ENCODE measurements at regions of chr19 and their contacts with region 1.

Region 1: GRCh38 chr19:49676690-49677231 is 310 bp upstream of the PRMT1 start:
- DNase-seq: peak; percentile 95 to 100 (median 98)
- ATAC-seq: peak; percentile 72
- H3K4me3 ChIP-seq: peak overlapping the region; percentile 99
- H3K4me3 Mint-ChIP-seq: peak overlapping the region; percentile 97
- H3K27ac ChIP-seq: peak overlapping the region; percentile 98
- H3K27ac Mint-ChIP-seq: peak overlapping the region; percentile 97
- H3K4me1 ChIP-seq: peaks cover 56% of the 10 kb centered on the region
- H3K4me1 Mint-ChIP-seq: peaks cover 46% of the 10 kb centered on the region
- H3K27me3 ChIP-seq: no peaks in the 10 kb centered on the region
- H3K27me3 Mint-ChIP-seq: no peaks in the 10 kb centered on the region
- CTCF ChIP-seq: no peak

Region 2: DNA sequence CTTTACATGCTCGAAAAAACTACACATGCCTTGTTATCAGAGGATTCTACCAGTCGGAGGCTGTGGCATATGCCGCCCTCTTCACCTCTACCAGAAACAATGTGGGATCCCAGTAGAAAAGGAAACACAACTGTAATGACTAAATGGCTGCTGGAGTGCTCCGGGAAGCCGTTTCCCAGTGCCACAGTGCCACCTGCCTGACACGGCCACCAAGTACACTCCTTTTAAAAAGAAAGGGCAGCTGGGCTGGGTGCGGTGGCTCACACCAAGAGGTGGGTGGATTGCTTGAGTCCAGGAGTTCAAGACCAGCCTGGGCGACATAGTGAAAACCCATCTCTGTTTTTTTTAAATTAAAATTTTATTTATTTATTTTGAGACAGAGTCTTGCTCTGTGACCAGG is 451.9 kb before region 1 on chr19:
- CTCF ChIA-PET with region 1: no interaction called
- POLR2A ChIA-PET with region 1: no interaction called
- intact Hi-C with region 1: loop called (anchors 1 to 2 kb)
- DNase-seq: peak in 5 of 14 experiments; percentile 11 to 56 (median 27)
- ATAC-seq: peak; percentile 43
- H3K4me3 ChIP-seq: no peak overlapping the region
- H3K4me3 Mint-ChIP-seq: no peak overlapping the region
- H3K27ac ChIP-seq: no peak overlapping the region
- H3K27ac Mint-ChIP-seq: no peak overlapping the region
- H3K4me1 ChIP-seq: peaks cover 8% of the 10 kb centered on the region
- H3K4me1 Mint-ChIP-seq: peaks cover 7% of the 10 kb centered on the region
- H3K27me3 ChIP-seq: peaks cover 0 to 4% of the 10 kb centered on the region in 2 experiments
- H3K27me3 Mint-ChIP-seq: peaks cover 13% of the 10 kb centered on the region
- CTCF ChIP-seq: no peak

Region 3: DNA sequence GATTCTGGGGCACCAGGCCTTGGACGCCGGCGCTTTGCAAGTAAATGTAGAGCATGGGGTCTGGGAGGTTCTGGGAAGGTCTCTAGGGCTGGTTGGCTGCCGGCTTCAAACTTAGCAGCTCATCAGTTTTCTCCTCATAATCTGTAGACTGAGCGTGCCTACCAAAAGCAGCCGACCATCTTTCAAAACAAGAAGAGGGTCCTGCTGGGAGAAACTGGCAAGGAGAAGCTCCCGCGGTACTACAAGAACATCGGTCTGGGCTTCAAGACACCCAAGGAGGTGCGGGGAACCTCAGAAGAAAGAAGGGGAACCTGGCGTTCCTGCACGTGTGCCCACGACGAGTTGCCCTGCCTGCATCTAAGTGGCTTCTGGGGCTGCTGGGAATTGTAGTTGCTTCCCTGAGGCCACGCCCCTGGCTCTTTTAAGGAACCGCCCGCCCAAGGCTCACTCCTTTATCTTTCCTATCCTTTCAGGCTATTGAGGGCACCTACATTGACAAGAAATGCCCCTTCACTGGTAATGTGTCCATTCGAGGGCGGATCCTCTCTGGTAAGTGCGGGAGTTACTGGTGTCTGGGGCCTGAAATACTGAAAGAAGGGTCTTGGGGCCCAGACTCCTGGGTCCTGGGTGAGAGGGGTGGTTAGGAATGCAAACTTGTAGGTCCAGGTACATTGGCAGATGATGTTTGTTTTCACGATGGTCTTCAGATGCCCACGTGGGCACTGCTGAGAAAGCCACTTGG is 179.5 kb before region 1 on chr19:
- CTCF ChIA-PET with region 1: no interaction called
- POLR2A ChIA-PET with region 1: interaction called, 11 read pairs
- intact Hi-C with region 1: loop called (anchors 2 kb)
- DNase-seq: peak; percentile 52 to 93 (median 73)
- ATAC-seq: peak; percentile 19
- H3K4me3 ChIP-seq: peak overlapping the region; percentile 99
- H3K4me3 Mint-ChIP-seq: peak overlapping the region; percentile 99
- H3K27ac ChIP-seq: peak overlapping the region; percentile 94 to 96
- H3K27ac Mint-ChIP-seq: peak overlapping the region; percentile 98
- H3K4me1 ChIP-seq: peaks cover 72% of the 10 kb centered on the region
- H3K4me1 Mint-ChIP-seq: peaks cover 70% of the 10 kb centered on the region
- H3K27me3 ChIP-seq: no peaks in the 10 kb centered on the region
- H3K27me3 Mint-ChIP-seq: no peaks in the 10 kb centered on the region
- CTCF ChIP-seq: no peak

Region 4: GRCh38 chr19:49580264-49581006 is 96.3 kb before region 1 on chr19 and contains the start of gene NOSIP:
- CTCF ChIA-PET with region 1: interaction called, 8 read pairs
- POLR2A ChIA-PET with region 1: interaction called, 17 read pairs
- intact Hi-C with region 1: no loop called
- DNase-seq: peak; percentile 93 to 98 (median 96)
- ATAC-seq: peak; percentile 98
- H3K4me3 ChIP-seq: peak within 1 kb of the TSS; percentile 75
- H3K4me3 Mint-ChIP-seq: peak within 1 kb of the TSS; percentile 90
- H3K27ac ChIP-seq: peak within 1 kb of the TSS in 1 of 2 donors; percentile 8
- H3K27ac Mint-ChIP-seq: peak within 1 kb of the TSS; percentile 67
- H3K4me1 ChIP-seq: peaks cover 18% of the 10 kb centered on the region
- H3K4me1 Mint-ChIP-seq: peaks cover 33% of the 10 kb centered on the region
- H3K27me3 ChIP-seq: no peaks in the 10 kb centered on the region
- H3K27me3 Mint-ChIP-seq: no peaks in the 10 kb centered on the region
- CTCF ChIP-seq: no peak
- total RNA-seq, gene NOSIP: 202 to 203 TPM

Region 5: GRCh38 chr19:49640113-49640898 is 36.5 kb before region 1 on chr19 and contains the start of gene RRAS:
- CTCF ChIA-PET with region 1: interaction called, 6 read pairs
- POLR2A ChIA-PET with region 1: interaction called, 70 read pairs
- intact Hi-C with region 1: loop called (anchors 1 to 2 kb)
- DNase-seq: peak; percentile 97 to 100 (median 99)
- ATAC-seq: peak; percentile 66
- H3K4me3 ChIP-seq: peak within 1 kb of the TSS; percentile 78
- H3K4me3 Mint-ChIP-seq: peak within 1 kb of the TSS; percentile 95
- H3K27ac ChIP-seq: peak within 1 kb of the TSS; percentile 91 to 96
- H3K27ac Mint-ChIP-seq: peak within 1 kb of the TSS; percentile 97
- H3K4me1 ChIP-seq: peaks cover 64% of the 10 kb centered on the region
- H3K4me1 Mint-ChIP-seq: peaks cover 65% of the 10 kb centered on the region
- H3K27me3 ChIP-seq: no peaks in the 10 kb centered on the region
- H3K27me3 Mint-ChIP-seq: no peaks in the 10 kb centered on the region
- CTCF ChIP-seq: no peak
- total RNA-seq, gene RRAS: 4.2 to 4.7 TPM

Region 6: DNA sequence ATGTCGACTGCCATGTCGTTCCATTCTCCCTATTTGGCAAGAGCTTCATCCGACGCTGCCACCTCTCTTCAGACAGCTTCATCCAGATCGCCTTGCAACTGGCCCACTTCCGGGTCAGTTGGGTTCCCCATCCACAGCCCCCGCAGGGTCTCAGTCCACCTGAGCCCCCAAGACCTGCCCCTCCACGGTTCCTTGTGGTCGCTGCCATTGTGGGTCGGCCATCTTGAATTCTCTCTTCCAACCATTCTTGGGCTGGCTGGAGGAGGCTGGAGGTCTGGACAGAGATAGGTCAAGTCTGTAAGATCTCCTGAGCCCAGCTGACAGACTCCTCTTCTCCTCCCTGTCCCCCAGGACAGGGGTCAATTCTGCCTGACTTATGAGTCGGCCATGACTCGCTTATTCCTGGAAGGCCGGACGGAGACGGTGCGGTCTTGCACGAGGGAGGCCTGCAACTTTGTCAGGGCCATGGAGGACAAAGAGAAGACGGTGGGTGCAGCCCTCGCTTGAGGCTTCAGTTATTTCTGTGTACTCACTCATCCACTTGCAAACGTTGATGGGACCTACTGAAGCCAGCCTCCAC is 33.7 kb after region 1 on chr19:
- CTCF ChIA-PET with region 1: no interaction called
- POLR2A ChIA-PET with region 1: no interaction called
- intact Hi-C with region 1: no loop called
- DNase-seq: no peak
- ATAC-seq: no peak
- H3K4me3 ChIP-seq: no peak overlapping the region
- H3K4me3 Mint-ChIP-seq: no peak overlapping the region
- H3K27ac ChIP-seq: no peak overlapping the region
- H3K27ac Mint-ChIP-seq: no peak overlapping the region
- H3K4me1 ChIP-seq: no peaks in the 10 kb centered on the region
- H3K4me1 Mint-ChIP-seq: no peaks in the 10 kb centered on the region
- H3K27me3 ChIP-seq: no peaks in the 10 kb centered on the region
- H3K27me3 Mint-ChIP-seq: no peaks in the 10 kb centered on the region
- CTCF ChIP-seq: no peak

Region 7: DNA sequence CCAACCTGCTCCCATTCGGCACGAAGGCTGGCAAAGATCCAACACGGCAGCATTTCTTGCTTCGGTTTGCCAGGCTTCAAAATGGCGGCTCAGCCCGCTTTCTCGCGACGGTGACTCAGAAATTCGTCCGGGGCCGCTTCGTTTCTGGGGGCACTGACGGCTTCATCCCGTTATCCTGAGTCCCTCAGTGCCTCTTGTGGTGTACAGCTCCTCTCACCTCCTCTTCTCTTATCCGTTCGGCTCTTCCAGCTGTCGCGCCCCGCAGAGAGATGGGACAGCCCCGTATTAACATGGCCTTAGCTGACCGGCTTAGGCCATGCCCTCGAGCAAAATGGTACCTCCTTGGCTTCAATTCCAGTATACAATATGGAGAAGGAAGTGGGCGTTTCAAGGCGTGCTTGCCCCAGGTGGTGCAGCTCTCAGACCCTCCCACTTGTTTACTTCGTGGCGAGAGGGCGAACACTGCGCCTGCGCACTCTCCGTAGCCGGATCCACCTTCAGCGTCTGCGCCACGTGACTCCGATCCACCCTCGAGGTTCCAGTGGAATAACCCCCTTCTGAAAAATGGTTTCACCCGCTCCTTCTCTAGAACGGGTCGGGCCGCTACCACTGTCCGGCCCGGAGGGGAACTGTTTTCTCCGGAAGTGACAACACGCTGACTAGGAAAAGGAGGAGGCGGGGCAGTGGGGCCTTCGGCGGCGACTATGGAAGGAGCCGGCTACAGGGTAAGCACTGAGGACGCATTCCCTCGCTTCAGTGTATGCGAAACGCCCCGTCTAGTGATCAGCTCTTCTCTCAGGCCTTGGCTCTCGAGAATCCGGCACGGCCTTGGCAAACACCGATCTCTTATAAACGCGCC is 200.5 kb after region 1 on chr19 and contains the starts of genes AKT1S1 and TBC1D17:
- CTCF ChIA-PET with region 1: no interaction called
- POLR2A ChIA-PET with region 1: interaction called, 10 read pairs
- intact Hi-C with region 1: no loop called
- DNase-seq: peak; percentile 95 to 100 (median 98)
- ATAC-seq: peak; percentile 60
- H3K4me3 ChIP-seq: peak within 1 kb of the TSS; percentile 88
- H3K4me3 Mint-ChIP-seq: no peak within 1 kb of the TSS
- H3K27ac ChIP-seq: peak within 1 kb of the TSS; percentile 98 to 100
- H3K27ac Mint-ChIP-seq: no peak within 1 kb of the TSS
- H3K4me1 ChIP-seq: peaks cover 35% of the 10 kb centered on the region
- H3K4me1 Mint-ChIP-seq: peaks cover 18% of the 10 kb centered on the region
- H3K27me3 ChIP-seq: no peaks in the 10 kb centered on the region
- H3K27me3 Mint-ChIP-seq: no peaks in the 10 kb centered on the region
- CTCF ChIP-seq: no peak
- total RNA-seq, gene AKT1S1: 15.1 to 15.8 TPM
- total RNA-seq, gene TBC1D17: 35.5 to 35.8 TPM

Region 8: DNA sequence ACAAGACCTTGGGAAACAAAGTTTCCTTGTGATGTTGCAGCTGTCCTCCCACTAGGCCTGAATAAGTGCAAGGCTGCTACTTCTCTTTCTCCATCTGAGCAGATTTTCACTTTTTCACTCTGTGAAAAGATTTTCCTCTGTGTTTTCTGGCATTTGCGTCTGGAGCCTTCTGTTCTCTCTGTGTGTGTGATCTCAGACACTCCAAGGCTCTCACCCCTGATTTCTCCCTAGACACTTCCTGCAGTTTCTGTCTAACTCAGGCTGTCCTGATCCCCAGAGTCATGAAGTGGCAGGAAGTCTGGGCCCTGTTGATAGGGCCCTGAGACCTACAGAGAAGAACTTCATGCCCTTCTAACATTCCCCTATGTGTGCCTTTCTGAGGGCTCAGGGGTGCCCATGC is 1502.5 kb after region 1 on chr19:
- CTCF ChIA-PET with region 1: no interaction called
- POLR2A ChIA-PET with region 1: no interaction called
- intact Hi-C with region 1: no loop called
- DNase-seq: no peak
- ATAC-seq: no peak
- H3K4me3 ChIP-seq: no peak overlapping the region
- H3K4me3 Mint-ChIP-seq: no peak overlapping the region
- H3K27ac ChIP-seq: no peak overlapping the region
- H3K27ac Mint-ChIP-seq: no peak overlapping the region
- H3K4me1 ChIP-seq: no peaks in the 10 kb centered on the region
- H3K4me1 Mint-ChIP-seq: no peaks in the 10 kb centered on the region
- H3K27me3 ChIP-seq: no peaks in the 10 kb centered on the region
- H3K27me3 Mint-ChIP-seq: peaks cover 14% of the 10 kb centered on the region
- CTCF ChIP-seq: no peak